Activated B cell treated with CpG ODN at 0.5 μM for 24 hours (primary cell): ENCODE measurements at regions of chr6 and their contacts with region 1.

Region 1: GRCh38 chr6:142935553-142936517 is 9.1 kb downstream of the HIVEP2 start:
- DNase-seq: peak; percentile 35
- ATAC-seq: peak; percentile 88
- H3K4me3 Mint-ChIP-seq: peak overlapping the region; percentile 83
- H3K27ac Mint-ChIP-seq: peak overlapping the region; percentile 90
- H3K4me1 Mint-ChIP-seq: peaks cover 72% of the 10 kb centered on the region
- H3K27me3 Mint-ChIP-seq: no peaks in the 10 kb centered on the region
- CTCF ChIP-seq: no peak

Region 2: GRCh38 chr6:142808378-142809061 is 127.3 kb before region 1 on chr6:
- CTCF ChIA-PET with region 1: no interaction called
- POLR2A ChIA-PET with region 1: interaction called, 13 read pairs
- intact Hi-C with region 1: no loop called
- DNase-seq: no peak
- ATAC-seq: no peak
- H3K4me3 Mint-ChIP-seq: no peak overlapping the region
- H3K27ac Mint-ChIP-seq: no peak overlapping the region
- H3K4me1 Mint-ChIP-seq: peaks cover 36% of the 10 kb centered on the region
- H3K27me3 Mint-ChIP-seq: no peaks in the 10 kb centered on the region
- CTCF ChIP-seq: no peak